Right ventricle myocardium inferior (tissue), 1 donor: ENCODE measurements at regions of chr2 and their contacts with region 1.

Region 1: GRCh38 chr2:129334696-129335410 is 644.6 kb upstream of the RAB6C start:
- DNase-seq: no peak
- ATAC-seq: peak; percentile 96

Region 2: DNA sequence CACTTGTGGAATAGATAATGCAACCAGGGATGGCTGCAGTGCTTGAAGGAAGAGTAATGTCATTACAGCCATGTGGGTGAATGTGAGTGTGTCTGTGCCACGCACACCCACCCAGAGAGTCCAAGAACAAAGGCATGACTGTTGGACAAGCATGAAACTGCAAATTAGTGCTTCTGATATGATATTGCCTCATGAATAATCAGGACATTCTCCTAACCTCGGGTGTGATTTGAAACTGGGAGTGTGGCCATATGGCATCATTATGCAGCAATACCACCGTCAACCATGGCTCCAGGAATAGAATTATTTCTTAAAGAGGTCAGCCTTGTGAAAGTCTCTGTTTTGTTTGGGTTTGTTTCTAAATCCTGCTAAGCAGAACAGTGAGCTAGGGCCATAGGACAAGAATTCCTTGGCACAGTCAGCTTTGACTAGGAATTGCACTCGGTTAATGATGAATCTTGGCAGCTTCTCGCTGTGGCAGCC is 33.4 kb before region 1 on chr2:
- intact Hi-C with region 1: loop called (anchors 2 kb)
- DNase-seq: no peak
- ATAC-seq: peak; percentile 78

Region 3: DNA sequence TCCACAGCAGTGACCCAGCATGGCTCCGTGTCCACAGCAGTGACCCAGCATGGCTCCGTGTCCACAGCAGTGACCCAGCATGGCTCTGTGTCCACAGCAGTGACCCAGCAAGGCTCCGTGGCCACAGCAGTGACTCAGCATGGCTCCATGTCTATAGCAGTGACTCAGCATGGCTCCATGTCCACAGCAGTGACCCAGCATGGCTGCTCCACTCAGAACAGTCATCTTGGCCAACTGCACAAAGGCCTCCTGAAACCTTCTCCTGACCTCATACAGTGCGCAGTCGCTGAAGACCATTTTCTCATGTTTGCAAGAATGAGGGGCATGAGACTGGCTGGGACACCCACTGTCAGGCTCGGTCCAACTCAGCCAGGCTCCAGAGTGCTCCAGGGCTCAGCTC is 311.3 kb after region 1 on chr2:
- intact Hi-C with region 1: no loop called
- DNase-seq: no peak
- ATAC-seq: no peak